Natural killer cell (primary cell): ENCODE measurements at regions of chr3 and their contacts with region 1.

Region 1: DNA sequence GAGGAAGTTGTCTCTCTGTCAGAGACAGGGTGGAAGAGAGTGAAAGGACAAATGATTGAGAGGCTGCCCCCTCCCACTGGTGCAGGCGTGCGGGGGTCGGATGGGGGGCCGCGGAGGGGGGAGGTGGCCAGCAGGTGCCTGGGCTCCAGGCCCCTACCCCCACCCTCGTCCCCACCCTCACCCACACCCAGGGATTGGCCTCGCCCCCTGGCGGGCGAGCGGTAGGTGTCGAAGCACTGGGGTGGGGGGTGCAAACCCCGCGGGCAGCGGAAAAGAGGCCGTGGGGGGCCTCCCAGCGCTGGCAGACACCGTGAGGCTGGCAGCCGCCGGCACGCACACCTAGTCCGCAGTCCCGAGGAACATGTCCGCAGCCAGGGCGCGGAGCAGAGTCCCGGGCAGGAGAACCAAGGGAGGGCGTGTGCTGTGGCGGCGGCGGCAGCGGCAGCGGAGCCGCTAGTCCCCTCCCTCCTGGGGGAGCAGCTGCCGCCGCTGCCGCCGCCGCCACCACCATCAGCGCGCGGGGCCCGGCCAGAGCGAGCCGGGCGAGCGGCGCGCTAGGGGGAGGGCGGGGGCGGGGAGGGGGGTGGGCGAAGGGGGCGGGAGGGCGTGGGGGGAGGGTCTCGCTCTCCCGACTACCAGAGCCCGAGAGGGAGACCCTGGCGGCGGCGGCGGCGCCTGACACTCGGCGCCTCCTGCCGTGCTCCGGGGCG is at the start of gene KAT2B:
- DNase-seq: peak; percentile 77 to 93
- ATAC-seq: peak; percentile 62 to 84 (median 77)
- H3K4me3 ChIP-seq: peak within 1 kb of the TSS; percentile 91
- H3K4me3 Mint-ChIP-seq: peak within 1 kb of the TSS; percentile 96
- H3K27ac ChIP-seq: peak within 1 kb of the TSS; percentile 93
- H3K27ac Mint-ChIP-seq: peak within 1 kb of the TSS; percentile 97 to 98
- H3K4me1 ChIP-seq: peaks cover 36% of the 10 kb centered on the region
- H3K4me1 Mint-ChIP-seq: peaks cover 48 to 53% of the 10 kb centered on the region in 2 donors
- H3K27me3 ChIP-seq: no peaks in the 10 kb centered on the region
- H3K27me3 Mint-ChIP-seq: no peaks in the 10 kb centered on the region
- CTCF ChIP-seq: peak; percentile 78
- total RNA-seq, gene KAT2B: 132 to 156 (median 146) TPM

Region 2: DNA sequence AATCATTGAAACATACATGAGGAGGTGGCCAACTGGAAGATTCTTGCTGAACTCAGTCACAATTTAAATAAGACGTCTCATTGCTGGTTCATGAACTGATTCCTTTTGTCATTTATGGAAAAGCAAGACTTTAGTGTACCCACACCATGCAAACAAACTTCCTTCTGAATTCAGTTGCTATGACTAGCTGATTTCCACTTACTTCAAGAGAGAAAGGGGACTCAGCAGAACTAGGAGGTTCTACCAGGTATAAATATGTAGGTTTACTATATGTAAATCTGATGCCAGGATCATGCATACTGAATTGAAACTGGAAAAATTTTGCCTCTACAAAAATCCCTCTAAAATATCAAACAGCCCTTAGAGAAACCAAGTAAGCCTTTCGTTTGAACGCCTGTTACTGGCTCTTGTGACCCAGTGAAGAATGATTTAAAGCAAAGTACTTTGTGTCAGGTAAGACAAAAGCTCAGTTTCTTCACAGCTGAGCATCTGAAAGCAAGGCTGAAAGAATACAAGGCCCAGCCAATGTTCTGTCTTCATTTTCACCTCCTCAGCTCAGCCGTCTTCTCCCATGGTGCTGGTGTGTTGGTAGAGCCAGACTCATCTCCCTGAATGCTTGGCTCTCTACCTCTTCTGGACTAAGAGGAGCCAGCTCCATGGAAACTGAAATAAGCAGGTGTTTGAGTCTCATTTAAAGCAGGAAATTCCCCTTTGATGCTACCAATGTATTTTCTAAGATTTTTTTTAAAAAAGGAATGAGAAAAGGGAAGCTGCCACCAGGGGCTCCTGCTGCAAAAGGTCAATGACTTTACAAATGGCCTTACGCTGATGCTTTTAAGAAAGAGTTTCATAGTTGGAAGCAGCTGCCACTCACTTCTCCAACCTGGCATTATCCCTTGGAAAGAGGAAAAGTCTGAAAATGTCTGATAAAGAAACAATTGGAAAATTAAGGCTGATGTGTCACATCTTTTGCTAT is 407.5 kb before region 1 on chr3:
- intact Hi-C with region 1: no loop called
- DNase-seq: no peak
- ATAC-seq: no peak
- H3K4me3 ChIP-seq: no peak overlapping the region
- H3K4me3 Mint-ChIP-seq: no peak overlapping the region
- H3K27ac ChIP-seq: no peak overlapping the region
- H3K27ac Mint-ChIP-seq: no peak overlapping the region
- H3K4me1 ChIP-seq: no peaks in the 10 kb centered on the region
- H3K4me1 Mint-ChIP-seq: no peaks in the 10 kb centered on the region
- H3K27me3 ChIP-seq: no peaks in the 10 kb centered on the region
- H3K27me3 Mint-ChIP-seq: no peaks in the 10 kb centered on the region
- CTCF ChIP-seq: no peak

Region 3: GRCh38 chr3:19946832-19947548 is 92.9 kb before region 1 on chr3 and contains the start of gene RAB5A:
- intact Hi-C with region 1: loop called (anchors 2 kb)
- DNase-seq: peak; percentile 87 to 99
- ATAC-seq: peak; percentile 81 to 92 (median 86)
- H3K4me3 ChIP-seq: peak within 1 kb of the TSS; percentile 89
- H3K4me3 Mint-ChIP-seq: peak within 1 kb of the TSS; percentile 97
- H3K27ac ChIP-seq: peak within 1 kb of the TSS; percentile 97
- H3K27ac Mint-ChIP-seq: peak within 1 kb of the TSS; percentile 96 to 97
- H3K4me1 ChIP-seq: peaks cover 19% of the 10 kb centered on the region
- H3K4me1 Mint-ChIP-seq: peaks cover 35 to 51% of the 10 kb centered on the region in 2 donors
- H3K27me3 ChIP-seq: no peaks in the 10 kb centered on the region
- H3K27me3 Mint-ChIP-seq: no peaks in the 10 kb centered on the region
- CTCF ChIP-seq: no peak
- total RNA-seq, gene RAB5A: 102 to 109 (median 102) TPM

Region 4: DNA sequence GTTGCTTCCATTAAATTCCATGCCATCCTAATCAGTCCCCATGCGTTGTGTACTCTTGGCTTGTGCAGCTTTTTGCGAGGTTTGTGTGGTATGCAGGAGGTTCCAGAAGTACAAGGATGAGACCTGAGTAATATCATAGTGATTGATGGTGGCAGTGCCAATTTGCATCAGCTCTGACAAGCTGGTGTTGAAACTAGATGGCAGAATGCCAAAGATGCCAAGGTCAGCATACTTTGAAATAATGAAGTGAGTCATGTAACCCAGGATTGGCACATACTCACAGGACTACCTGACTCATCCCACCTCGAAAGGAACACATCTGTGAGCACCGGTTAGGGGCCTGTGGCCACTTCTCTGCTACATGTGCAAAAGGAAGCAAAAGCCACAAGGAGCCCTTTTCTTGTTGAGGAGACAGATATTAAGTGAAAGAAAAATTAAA is 14.6 kb after region 1 on chr3:
- intact Hi-C with region 1: loop called (anchors 1 kb)
- DNase-seq: peak; percentile 61 to 83
- ATAC-seq: peak; percentile 84 to 95 (median 88)
- H3K4me3 ChIP-seq: no peak overlapping the region
- H3K4me3 Mint-ChIP-seq: no peak overlapping the region
- H3K27ac ChIP-seq: peak overlapping the region; percentile 83
- H3K27ac Mint-ChIP-seq: no peak overlapping the region
- H3K4me1 ChIP-seq: peaks cover 48% of the 10 kb centered on the region
- H3K4me1 Mint-ChIP-seq: peaks cover 39 to 44% of the 10 kb centered on the region in 2 donors
- H3K27me3 ChIP-seq: no peaks in the 10 kb centered on the region
- H3K27me3 Mint-ChIP-seq: no peaks in the 10 kb centered on the region
- CTCF ChIP-seq: no peak

Region 5: GRCh38 chr3:20066848-20067617 is 27.1 kb after region 1 on chr3:
- intact Hi-C with region 1: loop called (anchors 1 kb)
- DNase-seq: no peak
- ATAC-seq: peak; percentile 61 to 78 (median 73)
- H3K4me3 ChIP-seq: no peak overlapping the region
- H3K4me3 Mint-ChIP-seq: peak overlapping the region; percentile 71
- H3K27ac ChIP-seq: no peak overlapping the region
- H3K27ac Mint-ChIP-seq: peak overlapping the region; percentile 73 to 87
- H3K4me1 ChIP-seq: peaks cover 31% of the 10 kb centered on the region
- H3K4me1 Mint-ChIP-seq: peaks cover 81 to 85% of the 10 kb centered on the region in 2 donors
- H3K27me3 ChIP-seq: no peaks in the 10 kb centered on the region
- H3K27me3 Mint-ChIP-seq: no peaks in the 10 kb centered on the region
- CTCF ChIP-seq: no peak

Region 6: DNA sequence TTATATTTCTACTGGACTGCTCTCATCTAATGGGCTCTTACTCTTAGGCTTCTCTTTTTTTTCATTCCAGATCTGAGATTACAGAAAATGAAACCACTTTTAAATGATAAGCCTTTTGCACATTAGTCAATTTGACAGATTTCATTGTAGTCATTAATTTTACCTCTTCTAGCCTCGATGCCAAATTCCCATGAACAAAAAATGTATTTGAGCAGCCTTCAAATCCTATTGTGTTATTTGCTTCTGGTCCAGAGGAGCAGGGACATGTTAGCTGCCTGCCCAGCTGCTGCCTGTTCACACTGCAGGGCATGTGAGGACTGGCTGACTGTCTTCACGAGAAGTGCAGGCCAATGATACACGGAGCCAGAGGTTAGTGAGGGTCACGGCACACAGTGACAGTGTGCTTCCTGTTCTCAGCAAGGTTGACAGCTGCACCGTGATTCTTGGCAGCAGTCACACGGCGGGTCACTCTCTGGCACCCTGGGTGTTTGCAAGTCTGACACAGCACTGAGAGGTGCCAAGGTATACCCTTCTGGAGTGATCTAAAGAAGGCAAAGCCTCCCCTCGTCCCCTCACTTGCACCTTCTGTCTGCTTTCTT is 41.1 kb after region 1 on chr3:
- intact Hi-C with region 1: loop called (anchors 1 kb)
- DNase-seq: peak; percentile 57 to 65
- ATAC-seq: peak; percentile 97 to 98 (median 98)
- H3K4me3 ChIP-seq: no peak overlapping the region
- H3K4me3 Mint-ChIP-seq: peak overlapping the region; percentile 57
- H3K27ac ChIP-seq: peak overlapping the region; percentile 60
- H3K27ac Mint-ChIP-seq: peak overlapping the region; percentile 91 to 94
- H3K4me1 ChIP-seq: peaks cover 7% of the 10 kb centered on the region
- H3K4me1 Mint-ChIP-seq: peaks cover 45 to 47% of the 10 kb centered on the region in 2 donors
- H3K27me3 ChIP-seq: no peaks in the 10 kb centered on the region
- H3K27me3 Mint-ChIP-seq: no peaks in the 10 kb centered on the region
- CTCF ChIP-seq: no peak

Region 7: DNA sequence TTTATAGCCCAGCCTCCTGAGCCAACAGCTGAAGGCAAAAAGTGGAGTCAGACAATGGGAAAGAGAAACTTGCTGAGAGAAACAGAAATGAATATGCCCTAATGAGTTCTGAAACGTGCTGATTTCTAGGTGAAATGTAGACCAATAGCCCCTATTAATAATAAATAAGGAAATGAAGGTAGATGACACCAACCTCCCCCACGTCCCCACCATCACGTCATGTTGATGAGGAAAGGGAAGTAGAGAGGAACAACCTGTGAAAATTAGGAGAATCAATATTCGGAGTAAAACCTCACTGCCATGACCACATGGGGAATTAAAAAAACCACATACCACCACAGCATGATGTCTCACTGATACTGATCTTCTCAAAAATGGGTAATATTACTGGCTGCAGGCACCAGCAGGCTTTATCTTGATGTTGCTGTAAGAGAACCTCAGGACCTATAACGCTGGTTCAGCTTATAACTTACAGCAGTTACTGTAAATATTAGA is 64.3 kb after region 1 on chr3:
- intact Hi-C with region 1: loop called (anchors 2 kb)
- DNase-seq: peak; percentile 23 to 79
- ATAC-seq: peak; percentile 76 to 85 (median 78)
- H3K4me3 ChIP-seq: peak overlapping the region; percentile 10
- H3K4me3 Mint-ChIP-seq: peak overlapping the region; percentile 78
- H3K27ac ChIP-seq: peak overlapping the region; percentile 69
- H3K27ac Mint-ChIP-seq: peak overlapping the region; percentile 90
- H3K4me1 ChIP-seq: peaks cover 49% of the 10 kb centered on the region
- H3K4me1 Mint-ChIP-seq: peaks cover 69 to 75% of the 10 kb centered on the region in 2 donors
- H3K27me3 ChIP-seq: no peaks in the 10 kb centered on the region
- H3K27me3 Mint-ChIP-seq: no peaks in the 10 kb centered on the region
- CTCF ChIP-seq: no peak

Region 8: DNA sequence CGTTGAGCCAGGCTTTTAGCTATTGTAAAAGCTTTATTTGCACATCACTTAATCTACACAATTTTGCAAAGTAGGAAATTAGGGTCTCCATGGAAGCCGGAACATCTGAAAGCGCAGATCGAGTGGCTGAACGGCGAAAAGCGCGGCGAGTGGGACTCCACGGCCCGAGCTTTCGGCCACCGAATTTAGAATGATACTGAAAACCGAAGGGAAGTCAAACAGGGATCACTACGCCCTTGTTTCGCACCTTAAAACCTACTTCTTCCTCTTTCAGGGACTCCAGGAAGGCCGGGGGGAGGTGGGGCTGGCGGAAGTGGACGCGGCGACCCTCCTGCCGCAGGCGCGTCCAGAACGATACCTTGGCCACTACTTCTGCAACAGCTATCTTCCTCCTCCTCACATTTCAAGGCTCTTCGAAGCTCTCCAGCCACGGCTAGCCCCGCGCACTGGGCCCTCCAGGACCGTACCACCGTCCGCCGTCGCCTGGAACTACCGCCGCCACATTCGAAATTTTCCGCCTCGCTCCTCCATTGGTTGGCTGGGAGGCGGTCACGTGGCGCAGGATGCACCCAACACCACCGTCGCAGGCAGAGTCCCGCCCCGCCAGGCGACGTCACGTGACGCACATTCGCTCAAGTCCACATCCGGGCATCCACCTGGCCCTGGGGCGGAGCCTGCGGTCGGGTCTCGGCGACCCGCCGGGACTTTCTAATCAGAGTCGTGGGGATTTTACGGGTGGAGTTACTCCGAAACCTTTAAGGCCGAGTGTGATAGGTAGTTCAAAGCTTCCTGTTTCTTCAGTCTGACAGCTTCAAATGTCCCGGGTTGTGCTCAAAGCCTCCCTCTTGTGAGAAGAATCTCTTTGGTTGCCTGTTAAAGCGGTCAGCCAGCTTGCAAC is 146.0 kb after region 1 on chr3 and contains the start of gene SGO1:
- intact Hi-C with region 1: loop called (anchors 2 kb)
- DNase-seq: peak; percentile 100
- ATAC-seq: peak; percentile 90 to 97 (median 93)
- H3K4me3 ChIP-seq: peak within 1 kb of the TSS; percentile 77
- H3K4me3 Mint-ChIP-seq: no peak within 1 kb of the TSS
- H3K27ac ChIP-seq: peak within 1 kb of the TSS; percentile 95
- H3K27ac Mint-ChIP-seq: no peak within 1 kb of the TSS
- H3K4me1 ChIP-seq: peaks cover 12% of the 10 kb centered on the region
- H3K4me1 Mint-ChIP-seq: no peaks in the 10 kb centered on the region
- H3K27me3 ChIP-seq: no peaks in the 10 kb centered on the region
- H3K27me3 Mint-ChIP-seq: no peaks in the 10 kb centered on the region
- CTCF ChIP-seq: no peak
- total RNA-seq, gene SGO1: 0.55 to 1.4 (median 0.94) TPM